B cell (primary cell): ENCODE measurements at regions of chr17 and their contacts with region 1.

Region 1: GRCh38 chr17:59372138-59372857 is 40.8 kb downstream of the YPEL2 start:
- DNase-seq: peak; percentile 40
- ATAC-seq: peak; percentile 46
- H3K4me3 ChIP-seq: peak overlapping the region in 2 of 5 experiments; percentile 2 to 46
- H3K4me3 Mint-ChIP-seq: peak overlapping the region; percentile 66
- H3K27ac ChIP-seq: peak overlapping the region; percentile 55 to 71
- H3K27ac Mint-ChIP-seq: peak overlapping the region; percentile 88
- H3K4me1 ChIP-seq: peaks cover 69 to 94% of the 10 kb centered on the region in 2 donors
- H3K4me1 Mint-ChIP-seq: peaks cover 82% of the 10 kb centered on the region
- H3K27me3 ChIP-seq: no peaks in the 10 kb centered on the region
- H3K27me3 Mint-ChIP-seq: no peaks in the 10 kb centered on the region
- CTCF ChIP-seq: no peak

Region 2: DNA sequence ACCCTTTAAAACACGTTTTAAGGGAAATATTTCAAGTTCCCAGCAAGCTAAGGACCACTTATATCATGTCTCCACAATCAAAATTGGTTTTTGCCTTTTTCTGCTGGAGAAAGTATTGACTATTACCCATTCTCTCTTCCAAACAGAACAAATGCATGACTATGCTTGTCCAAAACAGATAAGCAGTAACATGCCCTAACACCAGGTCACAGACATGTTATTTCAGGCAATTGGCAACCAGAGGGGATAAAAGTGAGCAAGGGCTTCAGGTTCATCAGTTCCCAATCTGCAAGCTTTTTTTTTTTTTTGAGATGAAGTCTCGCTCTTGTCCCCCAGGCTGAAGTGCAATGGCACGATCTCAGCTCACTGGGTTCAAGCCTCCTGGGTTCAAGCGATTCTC is 232.4 kb before region 1 on chr17:
- CTCF ChIA-PET with region 1: no interaction called
- POLR2A ChIA-PET with region 1: no interaction called
- intact Hi-C with region 1: no loop called
- DNase-seq: no peak
- ATAC-seq: no peak
- H3K4me3 ChIP-seq: no peak overlapping the region
- H3K4me3 Mint-ChIP-seq: no peak overlapping the region
- H3K27ac ChIP-seq: no peak overlapping the region
- H3K27ac Mint-ChIP-seq: no peak overlapping the region
- H3K4me1 ChIP-seq: no peaks in the 10 kb centered on the region
- H3K4me1 Mint-ChIP-seq: no peaks in the 10 kb centered on the region
- H3K27me3 ChIP-seq: no peaks in the 10 kb centered on the region
- H3K27me3 Mint-ChIP-seq: no peaks in the 10 kb centered on the region
- CTCF ChIP-seq: no peak

Region 3: DNA sequence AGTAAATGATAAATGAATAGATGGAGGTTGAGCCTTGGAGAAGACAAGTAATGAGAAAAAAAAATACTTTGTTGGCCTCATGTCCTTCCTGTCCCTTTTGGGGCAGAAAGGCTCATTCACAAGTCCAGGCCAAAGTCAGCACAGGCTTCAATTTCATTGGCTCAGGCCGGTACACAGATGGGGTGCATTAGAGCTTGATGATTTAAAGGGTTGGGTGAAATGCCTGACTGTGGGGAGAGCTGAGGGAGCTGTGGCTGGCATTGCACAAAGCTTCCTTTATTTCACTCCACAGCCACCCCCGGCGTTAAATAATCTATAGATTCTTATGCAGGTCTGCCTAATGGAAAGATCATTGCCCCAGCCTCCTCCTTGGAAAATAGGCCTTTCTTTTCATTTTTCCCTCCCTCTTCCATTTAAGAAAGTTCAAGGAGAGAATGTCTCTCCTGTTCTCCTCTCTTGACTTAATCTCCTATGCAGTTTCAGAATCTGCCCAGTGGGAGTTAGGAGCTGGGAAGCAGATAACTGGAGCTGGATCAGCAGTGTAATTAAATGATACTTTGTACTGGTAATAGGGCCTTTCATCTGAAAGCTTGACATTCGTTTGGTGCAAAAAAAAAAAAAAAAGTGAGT is 16.5 kb before region 1 on chr17:
- CTCF ChIA-PET with region 1: interaction called, 5 read pairs
- POLR2A ChIA-PET with region 1: interaction called, 5 read pairs
- intact Hi-C with region 1: loop called (anchors 2 kb)
- DNase-seq: no peak
- ATAC-seq: no peak
- H3K4me3 ChIP-seq: no peak overlapping the region
- H3K4me3 Mint-ChIP-seq: no peak overlapping the region
- H3K27ac ChIP-seq: peak overlapping the region in 1 of 2 donors; percentile 16
- H3K27ac Mint-ChIP-seq: peak overlapping the region; percentile 33
- H3K4me1 ChIP-seq: peaks cover 40 to 48% of the 10 kb centered on the region in 2 donors
- H3K4me1 Mint-ChIP-seq: peaks cover 73% of the 10 kb centered on the region
- H3K27me3 ChIP-seq: no peaks in the 10 kb centered on the region
- H3K27me3 Mint-ChIP-seq: no peaks in the 10 kb centered on the region
- CTCF ChIP-seq: no peak

Region 4: GRCh38 chr17:59435238-59435637 is 62.9 kb after region 1 on chr17:
- CTCF ChIA-PET with region 1: interaction called, 5 read pairs
- POLR2A ChIA-PET with region 1: interaction called, 3 read pairs
- intact Hi-C with region 1: loop called (anchors 5 kb)
- DNase-seq: no peak
- ATAC-seq: no peak
- H3K4me3 ChIP-seq: no peak overlapping the region
- H3K4me3 Mint-ChIP-seq: no peak overlapping the region
- H3K27ac ChIP-seq: no peak overlapping the region
- H3K27ac Mint-ChIP-seq: no peak overlapping the region
- H3K4me1 ChIP-seq: peaks cover 31% of the 10 kb centered on the region in 2 donors
- H3K4me1 Mint-ChIP-seq: peaks cover 30% of the 10 kb centered on the region
- H3K27me3 ChIP-seq: no peaks in the 10 kb centered on the region
- H3K27me3 Mint-ChIP-seq: no peaks in the 10 kb centered on the region
- CTCF ChIP-seq: no peak

Region 5: GRCh38 chr17:59513934-59514841 is 141.9 kb after region 1 on chr17:
- CTCF ChIA-PET with region 1: no interaction called
- POLR2A ChIA-PET with region 1: no interaction called
- intact Hi-C with region 1: no loop called
- DNase-seq: no peak
- ATAC-seq: no peak
- H3K4me3 ChIP-seq: no peak overlapping the region
- H3K4me3 Mint-ChIP-seq: no peak overlapping the region
- H3K27ac ChIP-seq: no peak overlapping the region
- H3K27ac Mint-ChIP-seq: no peak overlapping the region
- H3K4me1 ChIP-seq: no peaks in the 10 kb centered on the region
- H3K4me1 Mint-ChIP-seq: no peaks in the 10 kb centered on the region
- H3K27me3 ChIP-seq: peaks cover 0 to 3% (median 0%) of the 10 kb centered on the region in 4 experiments
- H3K27me3 Mint-ChIP-seq: peaks cover 12% of the 10 kb centered on the region
- CTCF ChIP-seq: no peak